A673 (cell line): ENCODE measurements at regions of chr17 and their contacts with region 1.

Region 1: DNA sequence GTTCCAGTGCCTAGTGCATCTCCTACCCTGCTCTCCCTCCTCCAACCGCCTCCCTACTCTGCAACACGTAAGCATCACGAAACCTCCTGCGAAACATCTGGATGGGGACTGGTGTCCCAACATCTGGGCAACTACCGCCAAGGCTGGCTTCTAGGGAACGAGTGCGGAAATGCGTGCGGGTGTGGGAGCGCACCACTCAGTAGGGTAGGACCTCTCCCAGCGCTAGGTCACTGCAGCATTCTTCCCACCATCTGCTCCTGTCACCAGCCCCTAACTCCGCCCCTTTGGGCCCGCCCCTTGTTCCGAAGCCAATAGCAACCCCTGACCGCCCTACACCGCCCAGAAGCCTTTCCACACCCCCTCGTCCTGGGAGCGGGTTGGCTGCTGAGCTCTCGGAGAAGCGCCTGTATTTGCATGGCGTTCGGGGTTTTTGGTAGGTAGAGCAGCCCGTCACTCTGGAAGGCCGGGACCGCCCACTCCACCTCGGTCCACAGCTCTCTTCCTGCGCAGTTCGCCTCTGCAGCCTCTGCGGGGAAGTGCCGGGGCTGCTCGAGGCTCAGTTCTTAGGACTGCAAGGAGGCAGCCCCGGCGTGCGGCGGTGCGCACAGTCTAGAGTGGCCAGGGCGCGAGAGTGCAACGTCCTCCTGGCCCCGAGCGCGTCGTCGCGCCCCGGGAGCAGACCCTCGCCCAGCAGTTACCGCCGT is at the start of gene HS3ST3B1:
- DNase-seq: peak; percentile 97
- H3K4me3 ChIP-seq: peak within 1 kb of the TSS; percentile 40
- H3K27ac ChIP-seq: no peak within 1 kb of the TSS
- H3K4me1 ChIP-seq: peaks cover 20% of the 10 kb centered on the region
- H3K27me3 ChIP-seq: peaks cover 100% of the 10 kb centered on the region
- CTCF ChIP-seq: no peak
- total RNA-seq, gene HS3ST3B1: not detected in 2 replicates

Region 2: DNA sequence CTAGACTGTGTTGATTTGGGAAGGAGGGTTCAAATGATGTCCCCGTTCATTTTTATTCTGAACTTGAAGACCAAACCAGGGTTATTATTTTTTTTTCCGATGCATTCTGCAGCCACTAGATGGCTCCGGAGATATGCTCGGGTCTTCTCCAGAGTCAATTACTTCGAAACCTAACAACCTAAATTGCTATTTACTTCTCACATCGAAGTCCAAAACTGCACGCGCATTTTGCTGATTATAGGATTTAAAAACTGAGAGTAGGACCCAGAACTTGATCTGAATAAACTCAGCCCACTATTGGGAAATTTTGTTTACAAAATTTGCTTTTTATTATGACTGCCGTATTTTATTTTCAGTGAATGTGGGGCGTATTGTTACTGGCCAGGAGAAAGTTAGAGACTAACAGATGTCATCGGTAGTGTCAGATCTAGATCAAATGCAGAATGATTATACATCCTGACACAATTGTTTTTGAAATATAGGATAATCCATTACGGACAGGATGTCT is 962.8 kb before region 1 on chr17:
- CTCF ChIA-PET with region 1: no interaction called
- POLR2A ChIA-PET with region 1: no interaction called
- intact Hi-C with region 1: loop called (anchors 5 kb)
- DNase-seq: peak; percentile 55
- H3K4me3 ChIP-seq: no peak overlapping the region
- H3K27ac ChIP-seq: no peak overlapping the region
- H3K4me1 ChIP-seq: no peaks in the 10 kb centered on the region
- H3K27me3 ChIP-seq: peaks cover 3% of the 10 kb centered on the region
- CTCF ChIP-seq: peak; percentile 78

Region 3: DNA sequence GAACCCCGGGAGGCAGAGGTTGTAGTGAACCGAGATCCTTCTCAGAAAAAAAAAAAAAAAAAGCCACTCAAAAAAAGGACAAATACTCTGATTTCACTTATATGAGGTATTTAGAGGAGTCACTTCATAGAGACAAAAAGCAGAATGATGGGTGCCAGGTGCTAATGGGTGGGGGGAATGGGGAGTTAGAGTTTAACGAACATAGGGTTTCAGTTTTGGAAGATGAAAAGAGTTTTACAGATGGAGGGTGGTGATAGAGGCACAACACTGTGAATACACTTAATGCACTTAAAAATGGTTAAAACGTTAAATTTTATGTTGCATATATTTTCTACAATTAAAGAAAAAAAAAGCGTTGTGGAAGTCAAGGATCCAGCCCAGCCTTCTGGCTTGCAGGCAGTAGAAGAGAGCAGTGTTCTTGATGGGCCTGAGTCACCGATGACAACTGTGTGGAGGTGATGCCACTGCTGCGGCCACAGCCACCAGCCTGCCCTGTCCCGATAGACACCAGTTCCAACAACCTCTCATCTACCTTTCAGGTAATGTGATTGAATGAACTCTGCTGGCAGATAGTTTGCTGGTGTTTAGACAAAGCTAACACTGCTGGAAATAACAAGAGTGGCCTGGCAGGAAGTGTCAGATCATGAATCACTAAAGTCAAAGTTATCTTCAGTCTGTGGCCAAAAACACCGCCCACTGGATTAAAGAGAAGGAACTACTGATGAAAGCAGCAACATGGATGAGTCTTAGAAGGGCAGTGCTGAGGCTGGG is 281.4 kb before region 1 on chr17:
- CTCF ChIA-PET with region 1: no interaction called
- POLR2A ChIA-PET with region 1: no interaction called
- intact Hi-C with region 1: loop called (anchors 10 kb)
- DNase-seq: no peak
- H3K4me3 ChIP-seq: no peak overlapping the region
- H3K27ac ChIP-seq: no peak overlapping the region
- H3K4me1 ChIP-seq: no peaks in the 10 kb centered on the region
- H3K27me3 ChIP-seq: no peaks in the 10 kb centered on the region
- CTCF ChIP-seq: no peak

Region 4: GRCh38 chr17:14165616-14166015 is 135.1 kb before region 1 on chr17:
- CTCF ChIA-PET with region 1: no interaction called
- POLR2A ChIA-PET with region 1: no interaction called
- intact Hi-C with region 1: no loop called
- DNase-seq: no peak
- H3K4me3 ChIP-seq: no peak overlapping the region
- H3K27ac ChIP-seq: no peak overlapping the region
- H3K4me1 ChIP-seq: no peaks in the 10 kb centered on the region
- H3K27me3 ChIP-seq: no peaks in the 10 kb centered on the region
- CTCF ChIP-seq: no peak